Activated CD4-positive, alpha-beta T cell treated with anti-CD3 and anti-CD28 coated beads for 36 hours (primary cell): ENCODE measurements at regions of chr9 and their contacts with region 1.

Region 1: GRCh38 chr9:137353223-137354152 is 51.4 kb upstream of the NRARP start:
- DNase-seq: no peak
- ATAC-seq: no peak
- H3K4me3 Mint-ChIP-seq: no peak overlapping the region
- H3K27ac Mint-ChIP-seq: no peak overlapping the region
- H3K4me1 Mint-ChIP-seq: no peaks in the 10 kb centered on the region
- H3K27me3 Mint-ChIP-seq: no peaks in the 10 kb centered on the region

Region 2: DNA sequence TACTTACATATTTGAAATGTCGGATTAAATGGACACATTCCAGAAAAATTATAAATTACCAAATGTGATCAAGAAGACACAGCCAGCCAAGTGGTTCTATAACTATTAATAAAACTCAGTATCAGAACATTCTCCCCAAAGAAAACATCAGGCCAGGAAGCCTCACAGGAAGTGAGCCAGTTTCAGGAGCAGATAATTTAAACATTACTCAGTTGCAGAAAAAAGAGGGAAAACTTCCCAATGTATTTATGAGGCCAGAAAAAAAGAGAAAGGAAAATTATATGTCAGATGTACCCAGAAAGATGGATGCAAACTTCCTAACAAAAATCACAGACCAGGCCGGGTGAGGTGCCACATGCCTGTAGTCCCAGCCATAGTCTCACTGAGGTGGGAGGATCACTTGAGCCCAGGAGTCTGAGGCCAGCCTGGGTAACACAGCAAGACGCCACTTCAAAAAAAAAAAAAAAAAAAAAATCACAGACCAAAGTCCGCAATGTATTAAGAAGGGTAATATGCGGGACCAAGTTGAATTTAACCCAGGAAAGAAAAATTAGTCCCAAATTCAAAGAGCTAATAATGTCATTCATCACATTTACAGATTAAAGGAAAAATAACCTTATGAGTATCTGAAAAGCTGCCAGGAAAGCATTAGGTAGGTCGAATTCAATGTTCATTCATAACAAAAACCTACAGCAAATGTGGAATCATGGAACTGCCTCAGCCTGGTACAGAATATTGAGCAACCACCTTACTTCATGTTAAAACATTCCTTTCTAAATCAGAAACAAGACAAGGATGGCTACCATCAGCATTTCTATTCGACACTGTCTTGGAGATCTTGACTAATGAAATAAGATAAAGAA is 14.2 kb before region 1 on chr9:
- CTCF ChIA-PET with region 1: no interaction called
- POLR2A ChIA-PET with region 1: no interaction called
- intact Hi-C with region 1: no loop called
- DNase-seq: no peak
- ATAC-seq: no peak
- H3K4me3 Mint-ChIP-seq: no peak overlapping the region
- H3K27ac Mint-ChIP-seq: no peak overlapping the region
- H3K4me1 Mint-ChIP-seq: peaks cover 4% of the 10 kb centered on the region
- H3K27me3 Mint-ChIP-seq: no peaks in the 10 kb centered on the region

Region 3: GRCh38 chr9:137387114-137387890 is 33.8 kb after region 1 on chr9:
- CTCF ChIA-PET with region 1: no interaction called
- POLR2A ChIA-PET with region 1: no interaction called
- intact Hi-C with region 1: loop called in 1 of 2 experiments (anchors 5 kb)
- DNase-seq: peak; percentile 70
- ATAC-seq: peak; percentile 93
- H3K4me3 Mint-ChIP-seq: no peak overlapping the region
- H3K27ac Mint-ChIP-seq: peak overlapping the region; percentile 78
- H3K4me1 Mint-ChIP-seq: peaks cover 11% of the 10 kb centered on the region
- H3K27me3 Mint-ChIP-seq: no peaks in the 10 kb centered on the region

Region 4: GRCh38 chr9:137715321-137715720 is 361.8 kb after region 1 on chr9:
- CTCF ChIA-PET with region 1: no interaction called
- POLR2A ChIA-PET with region 1: no interaction called
- intact Hi-C with region 1: loop called in 1 of 2 experiments (anchors 10 kb)
- DNase-seq: no peak
- ATAC-seq: no peak
- H3K4me3 Mint-ChIP-seq: peak overlapping the region; percentile 9
- H3K27ac Mint-ChIP-seq: peak overlapping the region; percentile 75
- H3K4me1 Mint-ChIP-seq: peaks cover 28% of the 10 kb centered on the region
- H3K27me3 Mint-ChIP-seq: no peaks in the 10 kb centered on the region